ENCODE measurements at regions of chr9 and their contacts with region 1.

Region 1: GRCh38 chr9:98207606-98208005 is 15.2 kb upstream of the CORO2A start:
- DNase-seq: no peak
- H3K4me3 Mint-ChIP-seq: no peak overlapping the region
- H3K27ac Mint-ChIP-seq: no peak overlapping the region
- H3K4me1 Mint-ChIP-seq: peaks cover 5% of the 10 kb centered on the region
- H3K27me3 Mint-ChIP-seq: no peaks in the 10 kb centered on the region

Region 2: DNA sequence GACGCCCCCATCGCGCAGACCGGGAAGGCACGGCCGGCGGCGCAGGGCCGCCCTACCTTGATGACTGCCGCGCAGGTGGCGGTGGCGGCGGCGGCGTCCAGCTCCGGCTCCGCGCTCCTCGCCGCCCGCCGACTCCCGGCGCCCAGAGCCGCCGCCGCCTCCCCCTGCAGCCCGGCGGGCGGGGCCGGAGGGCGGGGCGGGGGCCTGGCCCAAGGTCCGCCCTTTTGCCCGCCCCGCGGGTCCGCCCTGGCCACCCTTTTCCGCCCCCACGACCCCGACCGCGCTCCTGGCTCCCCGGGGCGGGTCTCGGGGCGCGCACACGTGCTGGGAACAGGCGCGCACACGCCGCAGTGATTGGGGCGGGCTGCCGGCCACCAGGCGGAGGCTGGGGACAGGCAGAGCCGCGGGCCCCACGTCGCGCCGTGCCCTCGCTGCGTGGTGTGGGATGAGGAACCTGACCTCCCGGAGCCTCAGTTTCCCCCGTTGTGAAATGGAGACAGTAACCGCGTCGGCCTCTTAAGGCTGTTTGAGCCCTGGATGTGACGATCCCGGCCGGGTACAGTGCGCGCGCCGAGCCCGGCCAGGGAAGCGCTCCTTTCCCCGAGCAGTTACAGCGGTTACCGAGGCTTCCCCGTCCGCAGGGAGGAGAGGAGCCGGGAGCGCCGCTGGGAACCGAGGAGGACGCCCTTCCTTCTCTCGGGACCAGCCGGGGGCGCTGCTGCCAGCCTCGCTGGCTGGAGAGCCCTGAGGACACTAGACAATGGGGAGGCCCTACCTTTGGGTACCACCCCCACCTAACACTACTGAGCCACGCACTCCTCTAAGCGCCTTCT is 14.9 kb before region 1 on chr9 and contains the start of gene CORO2A:
- CTCF ChIA-PET with region 1: interaction called, 11 read pairs
- POLR2A ChIA-PET with region 1: no interaction called
- DNase-seq: peak; percentile 65
- H3K4me3 Mint-ChIP-seq: peak within 1 kb of the TSS; percentile 79
- H3K27ac Mint-ChIP-seq: peak within 1 kb of the TSS; percentile 82
- H3K4me1 Mint-ChIP-seq: peaks cover 18% of the 10 kb centered on the region
- H3K27me3 Mint-ChIP-seq: peaks cover 4% of the 10 kb centered on the region
- total RNA-seq, gene CORO2A: 7.2 to 8.2 TPM

Region 3: DNA sequence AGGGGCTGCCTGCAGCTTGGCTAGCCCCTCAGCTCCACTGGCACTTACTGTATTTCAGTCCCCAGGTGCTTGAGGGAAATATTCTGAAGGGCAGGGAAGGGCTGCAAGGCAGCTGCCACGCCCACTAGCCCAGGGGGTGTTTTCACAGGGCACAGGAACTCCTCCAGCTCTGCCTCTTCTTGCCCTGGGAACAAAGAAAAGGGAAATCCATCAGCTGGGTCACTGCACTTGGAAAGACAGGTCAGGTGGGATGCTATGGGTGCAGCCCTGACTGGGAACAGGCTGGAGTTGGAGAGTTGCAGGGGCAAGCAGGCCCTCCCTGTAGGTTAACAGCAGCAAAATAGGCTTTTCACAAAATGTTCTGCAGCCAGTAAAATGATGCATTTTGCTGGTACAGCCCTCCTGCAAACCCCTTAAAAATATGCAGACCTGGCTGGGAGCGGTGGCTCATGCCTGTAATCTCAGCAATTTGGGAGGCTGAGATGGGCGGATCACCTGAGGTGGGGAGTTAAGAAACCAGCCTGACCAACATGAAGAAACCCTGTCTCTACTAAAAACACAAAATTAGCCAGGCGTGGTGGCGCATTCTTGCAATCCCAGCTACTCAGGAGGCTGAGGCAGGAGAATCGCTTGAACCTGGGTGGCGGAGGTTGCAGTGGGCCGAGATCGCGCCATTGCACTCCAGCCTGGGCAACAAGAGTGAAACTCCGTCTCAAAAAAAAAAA is 36.5 kb after region 1 on chr9:
- CTCF ChIA-PET with region 1: no interaction called
- POLR2A ChIA-PET with region 1: no interaction called
- DNase-seq: no peak
- H3K4me3 Mint-ChIP-seq: no peak overlapping the region
- H3K27ac Mint-ChIP-seq: no peak overlapping the region
- H3K4me1 Mint-ChIP-seq: peaks cover 19% of the 10 kb centered on the region
- H3K27me3 Mint-ChIP-seq: no peaks in the 10 kb centered on the region